ENCODE measurements at regions of chr10 and their contacts with region 1.

Region 1: GRCh38 chr10:12605580-12606405 is 256.4 kb downstream of the CAMK1D start:
- DNase-seq: peak; percentile 37
- ATAC-seq: peak; percentile 79
- H3K4me3 Mint-ChIP-seq: peak overlapping the region; percentile 83
- H3K27ac Mint-ChIP-seq: peak overlapping the region; percentile 89
- H3K4me1 Mint-ChIP-seq: peaks cover 29% of the 10 kb centered on the region
- H3K27me3 Mint-ChIP-seq: no peaks in the 10 kb centered on the region
- CTCF ChIP-seq: no peak

Region 2: DNA sequence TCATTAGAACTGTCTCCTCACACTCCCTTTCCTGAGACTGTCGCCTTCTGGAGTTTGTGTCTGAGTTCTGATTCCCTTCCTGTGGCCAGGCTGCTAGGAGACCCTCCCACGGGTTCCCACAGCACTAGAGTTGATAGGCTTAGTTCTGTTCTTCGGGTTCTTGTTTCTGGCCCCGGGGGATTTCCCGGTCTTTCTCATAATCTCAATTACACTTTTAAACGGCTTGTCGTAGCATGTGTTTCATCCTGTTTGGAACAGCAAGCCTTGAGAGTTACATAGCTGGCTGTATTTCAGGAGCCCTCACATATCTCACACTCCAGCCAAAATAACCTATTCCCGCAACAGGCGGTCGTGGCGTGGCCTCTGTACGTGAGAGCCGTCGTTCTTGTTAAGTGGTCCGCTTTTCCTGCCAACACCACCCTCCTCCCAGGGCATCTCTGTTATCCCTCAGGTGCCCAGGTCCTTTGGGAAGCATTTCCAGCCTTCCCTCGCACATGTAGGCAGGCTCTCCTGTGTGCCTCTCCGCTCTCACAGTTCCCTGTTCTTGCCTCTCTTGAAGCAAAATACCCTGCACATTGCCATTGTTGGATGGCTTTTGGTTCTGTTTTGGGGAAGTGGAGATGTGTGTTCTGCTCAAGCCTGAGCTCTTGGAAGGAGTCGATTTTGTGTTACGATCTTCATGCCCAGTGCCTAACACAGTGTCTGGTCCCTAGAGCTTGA is 363.8 kb before region 1 on chr10:
- CTCF ChIA-PET with region 1: no interaction called
- POLR2A ChIA-PET with region 1: no interaction called
- intact Hi-C with region 1: loop called (anchors 1 kb)
- DNase-seq: no peak
- ATAC-seq: no peak
- H3K4me3 Mint-ChIP-seq: peak overlapping the region; percentile 29
- H3K27ac Mint-ChIP-seq: peak overlapping the region; percentile 75
- H3K4me1 Mint-ChIP-seq: peaks cover 69% of the 10 kb centered on the region
- H3K27me3 Mint-ChIP-seq: no peaks in the 10 kb centered on the region
- CTCF ChIP-seq: no peak

Region 3: DNA sequence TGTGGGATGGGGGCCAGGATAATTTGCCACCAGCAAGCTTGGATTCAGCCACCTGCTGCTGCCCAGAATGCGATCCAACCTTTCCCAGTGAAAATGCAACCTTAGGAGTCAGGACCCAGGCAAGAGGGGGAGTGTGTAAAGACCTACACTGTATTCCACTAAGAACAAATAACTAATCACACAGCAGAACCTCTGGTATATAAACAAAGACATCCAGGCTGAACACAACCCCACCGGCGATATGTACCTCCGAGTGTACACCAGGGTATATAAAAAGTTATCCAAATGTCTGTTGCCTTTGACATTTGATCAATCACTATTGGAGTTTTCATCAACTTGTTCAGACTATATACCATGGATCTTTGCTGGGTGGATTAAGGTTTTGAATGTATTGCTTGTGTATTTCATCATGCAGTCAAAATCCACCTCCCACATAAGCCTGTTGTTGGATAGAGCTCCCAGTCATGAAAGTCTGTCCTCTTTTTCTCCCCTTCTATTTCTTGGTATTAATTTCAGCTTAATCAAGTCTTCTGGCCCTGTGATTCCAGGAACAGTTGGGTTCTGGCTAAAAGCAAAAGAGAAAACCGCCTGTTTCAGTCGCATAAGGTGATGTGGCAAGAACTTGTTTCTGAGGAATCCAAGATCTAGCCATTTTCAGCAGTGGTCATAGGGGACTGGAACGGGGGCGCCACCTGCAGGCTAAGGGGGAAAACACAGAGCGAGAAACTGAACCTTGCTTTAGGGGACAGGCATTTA is 105.0 kb after region 1 on chr10:
- CTCF ChIA-PET with region 1: no interaction called
- POLR2A ChIA-PET with region 1: no interaction called
- intact Hi-C with region 1: no loop called
- DNase-seq: peak; percentile 68
- ATAC-seq: peak; percentile 93
- H3K4me3 Mint-ChIP-seq: no peak overlapping the region
- H3K27ac Mint-ChIP-seq: peak overlapping the region; percentile 54
- H3K4me1 Mint-ChIP-seq: peaks cover 23% of the 10 kb centered on the region
- H3K27me3 Mint-ChIP-seq: no peaks in the 10 kb centered on the region
- CTCF ChIP-seq: no peak

Measured in activated B cell treated with CpG ODN at 0.5 μM for 24 hours (primary cell).